MCF 10A (cell line): ENCODE measurements at regions of chr19 and their contacts with region 1.

Region 1: GRCh38 chr19:2168619-2169424 is 5.1 kb downstream of the DOT1L start:
- DNase-seq: peak; percentile 100
- H3K4me3 Mint-ChIP-seq: peak overlapping the region; percentile 56
- H3K27ac Mint-ChIP-seq: peak overlapping the region; percentile 96
- H3K4me1 Mint-ChIP-seq: peaks cover 20% of the 10 kb centered on the region
- H3K27me3 Mint-ChIP-seq: no peaks in the 10 kb centered on the region
- CTCF ChIP-seq: no peak

Region 2: GRCh38 chr19:2070436-2070827 is 98.4 kb before region 1 on chr19:
- CTCF ChIA-PET with region 1: no interaction called
- POLR2A ChIA-PET with region 1: no interaction called
- intact Hi-C with region 1: no loop called
- DNase-seq: no peak
- H3K4me3 Mint-ChIP-seq: no peak overlapping the region
- H3K27ac Mint-ChIP-seq: no peak overlapping the region
- H3K4me1 Mint-ChIP-seq: no peaks in the 10 kb centered on the region
- H3K27me3 Mint-ChIP-seq: no peaks in the 10 kb centered on the region
- CTCF ChIP-seq: no peak

Region 3: DNA sequence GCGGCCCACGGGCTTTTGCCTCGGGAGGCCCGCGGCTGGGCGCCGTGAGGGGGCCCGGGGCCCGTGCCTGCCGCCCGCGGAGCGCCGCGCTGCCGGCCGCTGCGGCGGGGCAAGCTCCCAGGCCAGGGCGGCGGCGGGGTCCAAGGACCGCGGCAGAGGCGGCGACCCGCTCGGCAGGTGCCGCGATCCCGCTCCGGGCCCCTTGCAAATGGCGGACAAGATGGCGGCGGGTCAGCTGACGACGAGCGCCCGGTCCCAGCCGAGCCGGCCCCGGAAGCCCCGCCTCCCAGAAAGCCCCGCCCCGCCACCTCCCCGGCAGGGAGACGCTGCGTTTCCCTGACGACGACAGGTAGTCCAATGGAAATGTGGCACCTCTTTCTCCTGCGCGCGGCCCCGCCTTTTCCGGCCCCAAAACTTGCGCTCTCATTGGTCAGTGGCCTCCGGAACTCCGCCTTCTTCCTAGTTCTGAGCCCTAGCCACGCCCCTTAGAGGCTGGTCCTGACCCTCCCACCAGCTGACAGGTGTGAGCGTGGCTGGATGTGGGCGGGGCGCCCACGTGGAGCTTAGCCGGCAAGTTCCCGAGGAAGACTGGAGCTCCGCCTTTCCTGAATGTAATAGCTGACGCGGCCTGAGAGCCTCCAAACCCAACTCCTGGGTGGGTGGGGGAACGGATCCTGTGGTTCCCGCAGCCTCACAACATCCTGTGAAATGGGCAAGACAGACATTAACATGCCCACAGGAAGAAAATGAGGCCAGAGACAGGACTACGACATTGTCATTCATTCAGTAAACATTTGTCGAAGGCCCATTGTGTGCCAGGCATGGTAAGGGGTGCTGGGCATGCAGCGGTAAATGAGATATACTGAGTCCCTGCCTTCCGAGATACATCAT is 17.2 kb before region 1 on chr19 and contains the start of gene AP3D1:
- CTCF ChIA-PET with region 1: interaction called, 5 read pairs
- POLR2A ChIA-PET with region 1: interaction called, 8 read pairs
- intact Hi-C with region 1: loop called (anchors 2 kb)
- DNase-seq: peak; percentile 100
- H3K4me3 Mint-ChIP-seq: peak within 1 kb of the TSS; percentile 78
- H3K27ac Mint-ChIP-seq: peak within 1 kb of the TSS; percentile 55
- H3K4me1 Mint-ChIP-seq: peaks cover 16% of the 10 kb centered on the region
- H3K27me3 Mint-ChIP-seq: no peaks in the 10 kb centered on the region
- CTCF ChIP-seq: no peak
- total RNA-seq, gene AP3D1: 172 and 181 TPM in 2 replicates

Region 4: GRCh38 chr19:2618611-2619010 is 449.8 kb after region 1 on chr19:
- CTCF ChIA-PET with region 1: interaction called, 5 read pairs
- POLR2A ChIA-PET with region 1: no interaction called
- intact Hi-C with region 1: loop called (anchors 5 kb)
- DNase-seq: peak; percentile 89
- H3K4me3 Mint-ChIP-seq: peak overlapping the region; percentile 3
- H3K27ac Mint-ChIP-seq: peak overlapping the region; percentile 95
- H3K4me1 Mint-ChIP-seq: peaks cover 18% of the 10 kb centered on the region
- H3K27me3 Mint-ChIP-seq: no peaks in the 10 kb centered on the region
- CTCF ChIP-seq: no peak

Region 5: DNA sequence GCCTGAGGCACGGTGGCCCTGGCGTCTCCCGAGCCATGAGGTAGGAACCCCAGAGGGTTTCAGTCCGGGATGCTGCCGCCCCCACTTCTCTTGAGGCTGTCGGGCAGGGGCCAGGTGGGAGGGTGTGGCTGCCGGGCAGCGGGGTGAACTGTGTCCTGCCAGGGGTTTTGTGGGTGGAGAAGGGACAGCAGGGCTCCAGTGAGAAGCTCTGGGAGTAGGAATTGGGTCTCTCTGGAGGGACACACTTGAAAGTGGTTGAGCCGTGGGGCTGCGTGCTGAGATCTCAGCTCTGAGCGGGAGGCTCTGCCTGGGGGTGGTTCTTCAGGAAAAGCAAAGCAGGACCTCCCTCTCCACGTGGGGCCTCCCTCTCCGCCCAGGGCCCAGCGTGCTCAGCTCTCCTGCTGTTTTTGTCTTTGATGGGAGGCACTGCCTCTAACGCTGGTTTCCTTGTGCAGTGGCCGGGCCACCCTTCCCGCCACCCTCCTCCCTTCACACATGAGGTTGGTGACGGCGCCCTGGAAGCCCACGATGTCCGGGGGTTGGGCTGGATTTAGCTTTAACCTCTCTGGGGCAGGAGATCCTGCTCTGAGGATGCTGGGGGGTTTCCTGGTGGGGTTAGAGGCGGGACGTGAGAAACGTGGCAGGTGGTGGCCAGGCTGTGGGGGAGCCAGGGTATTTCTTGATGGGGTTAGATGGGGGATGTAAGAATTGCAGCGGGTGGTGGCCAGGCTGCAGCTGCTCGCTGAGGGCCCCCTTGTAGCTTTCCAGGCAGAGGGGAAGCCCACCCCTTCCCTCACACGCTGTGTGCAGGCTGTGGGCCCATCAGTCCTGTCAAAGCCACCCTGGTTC is 635.6 kb after region 1 on chr19:
- CTCF ChIA-PET with region 1: no interaction called
- POLR2A ChIA-PET with region 1: no interaction called
- intact Hi-C with region 1: no loop called
- DNase-seq: no peak
- H3K4me3 Mint-ChIP-seq: no peak overlapping the region
- H3K27ac Mint-ChIP-seq: no peak overlapping the region
- H3K4me1 Mint-ChIP-seq: no peaks in the 10 kb centered on the region
- H3K27me3 Mint-ChIP-seq: no peaks in the 10 kb centered on the region
- CTCF ChIP-seq: no peak